ENCODE measurements at regions of chr2 and their contacts with region 1.

Region 1: DNA sequence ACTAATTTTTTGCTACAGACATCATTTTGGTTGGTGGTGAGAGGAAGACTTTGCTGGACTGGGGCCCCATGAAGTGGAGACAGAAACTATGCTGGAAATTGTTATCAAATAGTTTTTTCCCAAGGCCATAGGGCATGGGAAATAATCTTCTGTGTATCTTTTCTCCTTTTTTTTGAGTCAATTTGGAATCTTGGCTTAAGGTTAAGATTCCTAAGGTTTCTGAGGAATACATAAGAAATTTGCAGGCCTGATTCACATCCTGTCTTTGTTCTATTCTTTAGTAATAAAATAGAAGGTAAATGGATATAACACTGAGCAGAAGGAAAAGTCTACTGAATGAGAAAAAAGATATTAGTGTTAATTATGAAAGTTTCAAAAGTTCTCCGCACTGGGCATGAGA is 16.6 kb downstream of the SMC6 start:
- DNase-seq: no peak
- ATAC-seq: no peak
- H3K4me3 Mint-ChIP-seq: no peak overlapping the region
- H3K27ac Mint-ChIP-seq: peak overlapping the region; percentile 24
- H3K4me1 Mint-ChIP-seq: peaks cover 10% of the 10 kb centered on the region
- H3K27me3 Mint-ChIP-seq: no peaks in the 10 kb centered on the region
- CTCF ChIP-seq: no peak

Region 2: GRCh38 chr2:17690776-17691175 is 46.2 kb before region 1 on chr2:
- CTCF ChIA-PET with region 1: no interaction called
- POLR2A ChIA-PET with region 1: interaction called, 5 read pairs
- intact Hi-C with region 1: loop called (anchors 5 kb)
- DNase-seq: no peak
- ATAC-seq: no peak
- H3K4me3 Mint-ChIP-seq: no peak overlapping the region
- H3K27ac Mint-ChIP-seq: no peak overlapping the region
- H3K4me1 Mint-ChIP-seq: no peaks in the 10 kb centered on the region
- H3K27me3 Mint-ChIP-seq: no peaks in the 10 kb centered on the region
- CTCF ChIP-seq: no peak

Measured in activated B cell treated with CpG ODN at 0.5 μM for 24 hours (primary cell).